ENCODE measurements at regions of chr1 and their contacts with region 1.

Region 1: DNA sequence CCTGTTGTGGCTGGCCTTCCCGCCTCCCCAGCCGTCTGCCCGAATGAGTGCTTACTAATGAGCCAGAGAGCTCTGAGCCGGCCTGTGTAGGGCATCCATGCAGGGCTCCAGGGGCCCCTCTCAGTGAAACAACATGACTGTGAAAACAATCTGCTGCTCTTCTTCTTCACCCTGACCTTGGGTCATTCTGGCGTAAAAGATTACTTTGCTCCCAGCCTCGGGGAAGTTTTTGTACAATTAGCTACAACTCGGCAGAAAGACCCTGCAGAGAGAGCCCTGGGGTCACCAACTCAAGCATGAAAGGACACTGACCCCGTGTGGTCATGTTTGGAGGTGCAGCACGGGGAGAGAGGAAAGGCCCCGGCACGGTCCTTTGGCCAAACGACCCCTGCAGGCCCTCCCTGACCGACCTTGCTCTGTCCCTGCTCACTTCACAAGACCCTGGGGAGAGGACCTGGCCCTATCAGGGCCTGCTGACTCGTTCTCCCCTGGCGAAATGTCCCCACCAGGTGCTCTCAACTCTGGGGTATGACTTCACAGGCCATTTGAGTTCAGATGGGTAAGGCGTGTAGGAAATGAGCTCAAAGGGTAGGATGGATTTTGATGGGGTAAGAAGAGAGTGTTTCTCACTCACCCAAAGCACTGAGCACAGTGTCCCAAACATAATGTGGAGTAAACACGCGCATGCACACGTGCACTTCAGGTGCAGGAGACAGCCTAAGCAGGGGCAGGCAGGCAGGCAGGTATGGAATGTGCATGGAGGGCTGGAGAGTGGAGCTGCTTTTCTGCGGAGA is 22.9 kb upstream of the FAM20B start:
- DNase-seq: peak; percentile 74 to 90
- H3K4me3 ChIP-seq: peak overlapping the region in 1 of 4 donors; percentile 8
- H3K27ac ChIP-seq: no peak overlapping the region
- H3K4me1 ChIP-seq: peaks cover 3 to 20% (median 8%) of the 10 kb centered on the region in 4 donors
- H3K27me3 ChIP-seq: no peaks in the 10 kb centered on the region
- CTCF ChIP-seq: peak in 5 of 7 experiments; percentile 77 to 98 (median 95)
- EP300 ChIP-seq: no peak
- POLR2A ChIP-seq: no peak

Region 2: GRCh38 chr1:178308438-178308837 is 694.3 kb before region 1 on chr1:
- intact Hi-C with region 1: loop called (anchors 10 kb)
- DNase-seq: no peak
- H3K4me3 ChIP-seq: no peak overlapping the region
- H3K27ac ChIP-seq: no peak overlapping the region
- H3K4me1 ChIP-seq: peaks cover 0 to 24% (median 10%) of the 10 kb centered on the region in 4 donors
- H3K27me3 ChIP-seq: no peaks in the 10 kb centered on the region
- CTCF ChIP-seq: no peak
- EP300 ChIP-seq: no peak
- POLR2A ChIP-seq: no peak

Region 3: DNA sequence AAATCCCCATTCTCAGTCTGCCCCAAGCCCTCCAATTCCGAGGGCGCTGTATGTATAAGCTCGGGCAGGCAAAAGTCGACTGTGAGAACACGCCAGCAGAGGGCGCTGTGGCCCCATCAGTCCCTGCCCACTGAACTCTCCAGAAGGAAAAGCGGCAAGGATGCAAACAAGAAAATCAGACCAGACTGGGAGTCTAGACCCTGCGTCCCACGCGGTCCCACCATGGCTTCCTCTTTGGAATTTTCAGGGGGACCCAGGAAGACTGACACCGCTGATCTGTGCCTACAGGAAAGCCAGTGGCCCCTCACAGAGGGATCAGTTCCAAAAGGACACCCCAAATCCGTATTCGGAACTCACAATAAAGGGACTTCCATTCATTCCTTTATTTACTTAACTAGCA is 470.4 kb before region 1 on chr1:
- intact Hi-C with region 1: loop called (anchors 5 kb)
- DNase-seq: peak; percentile 91 to 94
- H3K4me3 ChIP-seq: no peak overlapping the region
- H3K27ac ChIP-seq: no peak overlapping the region
- H3K4me1 ChIP-seq: peaks cover 4 to 20% (median 11%) of the 10 kb centered on the region in 4 donors
- H3K27me3 ChIP-seq: no peaks in the 10 kb centered on the region
- CTCF ChIP-seq: peak in 5 of 7 experiments; percentile 64 to 91 (median 85)
- EP300 ChIP-seq: no peak
- POLR2A ChIP-seq: no peak

Region 4: DNA sequence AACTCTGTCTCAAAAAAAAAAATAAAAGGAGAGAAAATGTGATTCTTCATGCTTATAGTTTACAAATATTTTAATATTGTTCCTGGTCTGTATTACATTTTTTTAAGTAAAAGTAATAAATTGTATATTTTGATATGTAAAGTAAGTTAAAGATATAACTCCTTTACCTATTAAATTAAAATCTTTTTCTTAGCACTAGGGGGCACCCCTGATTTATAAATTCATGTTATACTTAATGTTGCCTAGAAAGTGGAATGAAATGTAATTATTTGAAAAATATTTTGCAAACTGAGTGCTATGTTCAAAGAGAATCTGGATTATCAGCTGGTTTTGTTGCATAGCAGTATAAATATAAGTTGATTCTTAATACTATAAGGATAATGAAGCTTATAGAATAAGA is 228.5 kb before region 1 on chr1:
- intact Hi-C with region 1: loop called (anchors 5 kb)
- DNase-seq: peak in 1 of 2 donors; percentile 54
- H3K4me3 ChIP-seq: no peak overlapping the region
- H3K27ac ChIP-seq: no peak overlapping the region
- H3K4me1 ChIP-seq: no peaks in the 10 kb centered on the region
- H3K27me3 ChIP-seq: no peaks in the 10 kb centered on the region
- CTCF ChIP-seq: peak in 2 of 7 experiments; percentile 25 to 37
- EP300 ChIP-seq: no peak
- POLR2A ChIP-seq: no peak

Region 5: DNA sequence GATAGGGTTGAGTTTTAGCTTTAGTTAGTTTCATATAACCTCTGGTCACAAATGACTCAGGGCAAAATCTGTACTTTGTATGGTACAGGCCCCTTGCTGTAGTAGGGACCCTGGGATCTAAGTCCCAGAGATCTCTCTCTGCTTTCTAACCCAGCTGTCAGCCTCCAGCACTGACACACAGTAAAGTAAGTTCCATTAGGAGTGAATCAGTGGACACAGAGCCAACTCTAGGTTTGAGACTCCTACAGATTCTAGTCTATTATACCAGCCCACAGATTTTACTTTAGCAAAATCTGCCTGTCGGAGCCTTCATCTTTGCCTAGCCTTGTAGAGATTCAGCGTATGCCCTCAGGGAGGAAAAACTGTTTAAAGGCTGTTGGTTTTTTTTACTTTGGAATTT is 184.3 kb before region 1 on chr1:
- intact Hi-C with region 1: no loop called
- DNase-seq: no peak
- H3K4me3 ChIP-seq: no peak overlapping the region
- H3K27ac ChIP-seq: no peak overlapping the region
- H3K4me1 ChIP-seq: peaks cover 0 to 7% (median 0%) of the 10 kb centered on the region in 4 donors
- H3K27me3 ChIP-seq: no peaks in the 10 kb centered on the region
- CTCF ChIP-seq: no peak
- EP300 ChIP-seq: no peak
- POLR2A ChIP-seq: no peak

Measured in stomach (tissue), 19 donors.